Endothelial cell of umbilical vein (primary cell): ENCODE measurements at regions of chr2 and their contacts with region 1.

Region 1: GRCh38 chr2:161122772-161123530 is 37.3 kb upstream of the TANK start:
- DNase-seq: peak; percentile 95
- H3K4me3 ChIP-seq: peak overlapping the region in 1 of 3 experiments; percentile 21
- H3K27ac ChIP-seq: peak overlapping the region; percentile 92
- H3K4me1 ChIP-seq: peaks cover 27% of the 10 kb centered on the region
- H3K27me3 ChIP-seq: no peaks in the 10 kb centered on the region
- CTCF ChIP-seq: no peak
- POLR2A ChIP-seq: no peak

Region 2: GRCh38 chr2:161104054-161104553 is 18.8 kb before region 1 on chr2:
- CTCF ChIA-PET with region 1: interaction called, 6 read pairs
- POLR2A ChIA-PET with region 1: no interaction called
- dilution Hi-C with region 1: no loop called
- intact Hi-C with region 1: loop called (anchors 2 kb)
- DNase-seq: no peak
- H3K4me3 ChIP-seq: no peak overlapping the region
- H3K27ac ChIP-seq: no peak overlapping the region
- H3K4me1 ChIP-seq: peaks cover 22% of the 10 kb centered on the region
- H3K27me3 ChIP-seq: no peaks in the 10 kb centered on the region
- CTCF ChIP-seq: no peak
- POLR2A ChIP-seq: no peak

Region 3: GRCh38 chr2:161136696-161137324 is 13.9 kb after region 1 on chr2:
- CTCF ChIA-PET with region 1: interaction called, 6 read pairs
- POLR2A ChIA-PET with region 1: interaction called, 5 read pairs
- dilution Hi-C with region 1: no loop called
- intact Hi-C with region 1: loop called (anchors 1 kb)
- DNase-seq: peak; percentile 90
- H3K4me3 ChIP-seq: peak overlapping the region in 2 of 3 experiments; percentile 32 to 78
- H3K27ac ChIP-seq: peak overlapping the region; percentile 88
- H3K4me1 ChIP-seq: peaks cover 45% of the 10 kb centered on the region
- H3K27me3 ChIP-seq: no peaks in the 10 kb centered on the region
- CTCF ChIP-seq: no peak
- POLR2A ChIP-seq: peak; percentile 59

Region 4: GRCh38 chr2:161160226-161161069 is 37.5 kb after region 1 on chr2 and contains the start of gene TANK:
- CTCF ChIA-PET with region 1: no interaction called
- POLR2A ChIA-PET with region 1: no interaction called
- dilution Hi-C with region 1: no loop called
- intact Hi-C with region 1: loop called (anchors 5 kb)
- DNase-seq: peak; percentile 84
- H3K4me3 ChIP-seq: peak within 1 kb of the TSS; percentile 30 to 89 (median 50)
- H3K27ac ChIP-seq: peak within 1 kb of the TSS; percentile 75
- H3K4me1 ChIP-seq: peaks cover 18% of the 10 kb centered on the region
- H3K27me3 ChIP-seq: no peaks in the 10 kb centered on the region
- CTCF ChIP-seq: no peak
- POLR2A ChIP-seq: peak; percentile 90
- total RNA-seq, gene TANK: 83.2 and 88.2 TPM in 2 replicates